ENCODE measurements at regions of chr11 and their contacts with region 1.

Region 1: DNA sequence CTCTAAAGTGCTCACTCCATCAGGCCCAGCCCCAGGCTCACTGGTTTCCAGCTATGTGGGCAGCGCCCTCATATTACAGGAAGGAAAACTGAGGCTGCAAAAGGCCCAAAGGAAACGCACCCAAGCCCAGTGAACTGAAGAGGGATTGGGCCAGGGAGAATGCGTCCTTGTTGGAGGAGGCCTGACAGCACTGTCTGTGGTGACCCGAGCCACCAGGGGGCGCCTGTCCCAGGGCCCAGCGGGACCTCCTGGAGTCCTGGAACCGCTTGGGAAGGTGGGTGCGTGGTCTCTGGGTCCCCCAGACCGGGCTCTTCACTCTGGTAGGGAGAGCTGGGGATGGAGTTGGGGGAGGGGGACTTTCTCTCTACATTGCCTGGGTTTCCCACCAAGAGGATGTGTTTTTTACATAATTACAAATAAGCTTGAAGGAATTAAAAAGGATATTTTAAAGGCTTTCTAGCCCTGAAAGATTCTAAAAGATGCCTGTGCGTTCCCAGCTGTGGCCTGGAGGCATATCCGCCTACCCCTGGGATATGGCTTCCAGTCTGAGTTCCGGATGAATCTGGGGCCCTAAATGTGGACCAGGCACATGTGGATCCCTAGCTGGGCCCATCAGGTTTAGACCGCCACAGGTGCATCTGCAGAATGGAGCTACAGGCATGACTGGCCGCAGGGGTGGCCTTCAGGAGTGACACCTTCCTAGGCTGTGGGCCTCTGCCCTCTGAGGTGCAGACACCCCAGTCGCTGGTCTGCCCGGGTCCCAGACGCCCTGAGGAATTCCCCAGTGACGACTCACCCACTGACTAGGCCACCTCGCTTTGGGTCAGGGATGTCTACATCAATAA is 4.2 kb downstream of the SPI1 start:
- DNase-seq: peak; percentile 92
- ATAC-seq: peak; percentile 82

Region 2: DNA sequence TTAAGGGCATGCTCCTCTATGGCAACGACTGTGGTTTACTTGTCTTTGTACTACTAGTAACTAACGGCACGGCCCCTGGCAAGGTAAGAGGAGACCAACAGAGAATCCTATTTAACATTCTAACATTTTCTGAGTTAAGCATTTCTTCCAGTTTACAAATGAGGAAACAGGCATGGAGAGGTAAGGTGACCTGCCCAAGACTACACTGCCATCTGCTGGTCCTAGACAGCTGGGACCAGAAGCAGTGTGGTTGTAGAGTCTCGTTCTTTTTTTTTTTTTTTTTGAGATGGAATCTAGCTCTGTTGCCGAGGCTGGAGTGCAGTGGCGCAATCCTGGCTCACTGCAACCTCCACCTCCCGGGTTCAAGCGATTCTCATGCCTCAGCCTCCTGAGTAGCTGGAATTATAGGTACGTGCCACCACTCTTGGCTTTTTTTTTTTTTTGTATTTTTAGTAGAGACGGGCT is 80.1 kb after region 1 on chr11:
- intact Hi-C with region 1: loop called (anchors 5 kb)
- DNase-seq: peak; percentile 75
- ATAC-seq: peak; percentile 92

Region 3: GRCh38 chr11:47495011-47495855 is 121.1 kb after region 1 on chr11:
- intact Hi-C with region 1: no loop called
- DNase-seq: no peak
- ATAC-seq: no peak

Region 4: GRCh38 chr11:47858169-47858543 is 484.1 kb after region 1 on chr11:
- intact Hi-C with region 1: loop called (anchors 10 kb)
- DNase-seq: no peak
- ATAC-seq: no peak